Esophagus muscularis mucosa (tissue), 4 donors: ENCODE measurements at regions of chr5 and their contacts with region 1.

Region 1: DNA sequence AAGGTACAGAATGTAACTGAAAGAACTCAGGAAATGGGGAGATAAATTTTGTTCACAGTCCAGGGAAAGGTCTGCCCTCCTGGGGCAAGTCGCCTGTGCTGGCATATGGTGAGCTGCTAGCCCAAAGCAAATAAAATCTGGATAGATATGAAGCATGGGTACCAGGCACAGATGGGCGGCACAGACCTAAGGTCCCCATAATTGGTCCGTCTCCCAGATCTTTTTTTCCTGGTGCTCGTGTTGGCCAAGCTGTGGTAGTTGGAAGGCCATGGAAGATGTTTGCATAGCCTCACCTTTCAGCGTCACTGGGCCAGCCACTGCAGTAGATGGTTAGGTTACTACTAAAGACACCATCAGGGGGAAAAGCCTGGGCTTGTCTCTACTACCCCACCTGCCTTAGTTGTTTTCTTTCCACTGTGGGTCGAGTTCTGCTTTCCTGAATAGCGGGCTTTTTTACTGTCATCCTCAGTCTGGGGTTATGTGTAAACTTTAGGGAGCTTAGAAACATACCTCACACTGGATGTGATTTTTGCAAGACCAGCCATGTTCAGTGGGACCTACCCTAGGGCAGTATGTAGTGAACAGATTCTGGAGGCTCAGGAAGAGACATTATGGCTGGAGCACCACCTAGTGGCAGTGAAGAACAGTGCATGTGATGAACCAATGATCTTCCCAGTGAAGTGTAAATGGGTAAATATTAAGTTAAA is 24.2 kb upstream of the GLRX start:
- DNase-seq: no peak
- H3K4me3 ChIP-seq: no peak overlapping the region
- H3K27ac ChIP-seq: no peak overlapping the region
- H3K4me1 ChIP-seq: peaks cover 3 to 16% (median 13%) of the 10 kb centered on the region in 4 donors
- H3K27me3 ChIP-seq: no peaks in the 10 kb centered on the region
- CTCF ChIP-seq: peak; percentile 93 to 96 (median 93)
- EP300 ChIP-seq: no peak
- POLR2A ChIP-seq: no peak

Region 2: DNA sequence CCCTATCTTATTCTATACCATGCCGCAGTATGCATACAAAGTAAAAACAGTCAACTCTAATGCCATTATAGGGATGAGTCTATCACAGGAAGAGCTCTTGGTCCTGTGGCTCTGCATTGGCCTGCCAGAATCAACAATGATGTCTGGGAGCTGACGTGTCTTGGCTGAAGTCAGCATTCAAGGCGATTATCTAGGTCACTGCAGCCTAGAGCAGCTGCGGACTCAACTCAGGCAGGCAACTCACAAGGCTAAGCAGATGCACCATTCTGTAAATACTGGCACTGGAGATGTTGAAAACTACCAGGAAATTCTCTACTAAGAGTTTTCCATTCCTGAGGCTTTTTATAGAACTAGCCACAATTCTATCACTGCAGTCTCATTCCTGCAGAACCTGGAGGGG is 177.2 kb before region 1 on chr5:
- intact Hi-C with region 1: loop called (anchors 5 kb)
- DNase-seq: peak; percentile 93
- H3K4me3 ChIP-seq: no peak overlapping the region
- H3K27ac ChIP-seq: peak overlapping the region; percentile 62 to 83 (median 79)
- H3K4me1 ChIP-seq: peaks cover 17 to 38% (median 25%) of the 10 kb centered on the region in 4 donors
- H3K27me3 ChIP-seq: no peaks in the 10 kb centered on the region
- CTCF ChIP-seq: peak in 1 of 3 experiments; percentile 4
- EP300 ChIP-seq: no peak
- POLR2A ChIP-seq: no peak

Region 3: GRCh38 chr5:95684361-95684760 is 162.3 kb before region 1 on chr5:
- intact Hi-C with region 1: no loop called
- DNase-seq: no peak
- H3K4me3 ChIP-seq: no peak overlapping the region
- H3K27ac ChIP-seq: no peak overlapping the region
- H3K4me1 ChIP-seq: no peaks in the 10 kb centered on the region
- H3K27me3 ChIP-seq: no peaks in the 10 kb centered on the region
- CTCF ChIP-seq: no peak
- EP300 ChIP-seq: no peak
- POLR2A ChIP-seq: no peak

Region 4: DNA sequence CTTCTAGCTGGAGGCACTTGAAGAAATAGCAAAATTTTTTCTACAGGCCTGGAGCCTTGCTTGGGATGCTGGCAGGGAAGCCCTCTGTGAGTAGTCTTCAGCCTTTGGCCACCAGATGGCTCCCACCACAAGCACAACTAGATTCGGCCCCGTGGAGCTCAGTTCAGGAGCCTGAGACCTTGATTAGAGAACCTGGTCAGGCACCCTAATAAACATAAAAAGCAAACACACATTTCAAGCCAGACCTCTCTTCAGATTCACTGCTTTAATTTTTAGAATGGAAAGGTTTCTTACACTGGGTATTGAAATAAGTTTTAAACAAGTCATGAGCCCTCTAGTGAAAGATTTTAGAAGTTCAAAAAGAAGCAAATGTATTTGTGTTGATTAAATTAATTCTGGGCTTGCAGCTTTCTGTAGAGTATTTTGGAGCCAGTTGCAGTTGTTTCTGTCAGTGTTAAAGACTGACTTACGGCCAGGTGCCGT is 65.6 kb before region 1 on chr5:
- intact Hi-C with region 1: loop called (anchors 1 kb)
- DNase-seq: peak; percentile 95
- H3K4me3 ChIP-seq: no peak overlapping the region
- H3K27ac ChIP-seq: peak overlapping the region; percentile 46 to 65 (median 59)
- H3K4me1 ChIP-seq: peaks cover 13 to 40% (median 24%) of the 10 kb centered on the region in 4 donors
- H3K27me3 ChIP-seq: no peaks in the 10 kb centered on the region
- CTCF ChIP-seq: peak; percentile 85 to 93 (median 85)
- EP300 ChIP-seq: no peak
- POLR2A ChIP-seq: no peak

Region 5: DNA sequence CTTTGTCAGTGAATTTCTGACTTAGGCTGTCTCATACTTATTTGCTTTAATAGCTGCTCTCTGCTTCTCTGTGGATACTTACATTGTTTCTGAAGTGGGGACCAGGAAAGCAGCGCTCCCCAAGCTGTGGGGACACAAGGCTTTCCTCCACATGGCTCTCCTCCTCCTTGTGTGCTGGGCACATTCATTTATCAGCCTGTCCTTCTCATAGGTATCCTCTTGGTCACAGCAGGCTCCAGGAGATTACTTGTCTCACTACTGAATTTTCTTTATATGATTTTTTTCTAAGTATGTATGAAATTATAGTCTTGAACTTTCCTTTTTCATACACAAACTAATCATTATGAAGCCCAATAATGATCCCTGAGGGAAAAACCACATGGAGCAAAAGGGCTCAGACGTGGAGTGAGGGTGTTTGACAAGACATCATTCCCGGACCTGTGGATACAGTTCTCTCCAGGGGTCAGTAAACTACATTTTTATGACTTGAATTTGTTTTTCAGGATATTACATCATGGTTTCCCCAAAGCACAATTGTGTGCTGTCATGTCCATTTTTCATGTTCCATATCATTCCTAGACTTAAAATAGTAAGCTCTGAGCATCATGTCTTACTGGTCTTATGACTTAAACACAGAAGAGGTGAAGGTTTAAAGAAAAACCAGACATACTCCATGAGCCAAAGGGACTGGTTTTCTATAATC is 351.8 kb after region 1 on chr5:
- intact Hi-C with region 1: no loop called
- DNase-seq: no peak
- H3K4me3 ChIP-seq: no peak overlapping the region
- H3K27ac ChIP-seq: no peak overlapping the region
- H3K4me1 ChIP-seq: peaks cover 0 to 13% (median 3%) of the 10 kb centered on the region in 4 donors
- H3K27me3 ChIP-seq: no peaks in the 10 kb centered on the region
- CTCF ChIP-seq: no peak
- EP300 ChIP-seq: no peak
- POLR2A ChIP-seq: no peak